Kidney (tissue), 22 donors: ENCODE measurements at regions of chr12 and their contacts with region 1.

Region 1: GRCh38 chr12:50986966-50987737 is 34.8 kb downstream of the HIGD1C start:
- DNase-seq: peak in 4 of 5 donors; percentile 35 to 87 (median 57)
- H3K4me3 ChIP-seq: no peak overlapping the region
- H3K27ac ChIP-seq: no peak overlapping the region
- H3K4me1 ChIP-seq: peaks cover 0 to 13% (median 6%) of the 10 kb centered on the region in 3 donors
- H3K27me3 ChIP-seq: no peaks in the 10 kb centered on the region
- CTCF ChIP-seq: peak; percentile 67

Region 2: DNA sequence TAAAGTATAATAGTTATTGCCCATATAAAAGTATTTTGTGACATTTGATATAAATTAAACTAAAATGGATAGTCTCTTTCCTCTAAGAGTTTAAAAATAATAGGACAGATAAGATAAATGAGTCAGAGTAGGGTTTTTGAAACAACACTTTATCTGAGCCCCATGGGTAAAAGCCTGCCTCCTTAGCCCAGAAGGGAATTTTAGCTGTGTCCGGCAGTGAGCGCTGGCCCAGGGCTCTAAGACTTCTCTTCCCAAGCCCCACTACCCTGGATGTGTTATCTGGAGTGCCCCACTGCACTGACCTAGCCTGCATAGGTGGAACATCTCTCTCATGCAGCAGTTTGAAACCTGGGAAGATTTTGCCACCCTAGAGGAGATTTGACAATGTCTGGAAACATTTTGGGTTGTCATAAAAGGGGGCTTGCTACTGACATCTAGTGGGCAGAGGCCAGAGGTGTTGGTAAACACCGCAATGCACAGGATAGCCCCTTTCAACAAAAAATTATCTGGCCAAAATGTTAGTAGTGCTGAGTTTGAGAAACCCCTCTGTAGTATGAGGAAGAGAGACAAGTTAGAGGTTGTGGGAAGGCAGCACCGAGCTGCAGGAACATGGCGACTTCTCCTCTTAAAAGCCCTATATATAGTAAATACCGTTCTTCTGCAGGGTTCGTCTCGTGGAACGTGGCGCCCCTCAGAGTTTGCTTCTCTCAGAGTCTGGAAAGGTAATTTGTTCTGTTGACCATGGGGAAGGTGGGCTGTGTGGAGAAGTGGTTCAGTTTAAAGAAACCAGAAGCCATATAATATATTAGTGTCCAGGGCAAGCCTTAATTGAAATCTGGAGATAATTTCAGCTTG is 252.5 kb before region 1 on chr12:
- intact Hi-C with region 1: no loop called
- DNase-seq: peak in 3 of 5 donors; percentile 38 to 69 (median 41)
- H3K4me3 ChIP-seq: no peak overlapping the region
- H3K27ac ChIP-seq: no peak overlapping the region
- H3K4me1 ChIP-seq: no peaks in the 10 kb centered on the region
- H3K27me3 ChIP-seq: no peaks in the 10 kb centered on the region
- CTCF ChIP-seq: peak; percentile 42

Region 3: DNA sequence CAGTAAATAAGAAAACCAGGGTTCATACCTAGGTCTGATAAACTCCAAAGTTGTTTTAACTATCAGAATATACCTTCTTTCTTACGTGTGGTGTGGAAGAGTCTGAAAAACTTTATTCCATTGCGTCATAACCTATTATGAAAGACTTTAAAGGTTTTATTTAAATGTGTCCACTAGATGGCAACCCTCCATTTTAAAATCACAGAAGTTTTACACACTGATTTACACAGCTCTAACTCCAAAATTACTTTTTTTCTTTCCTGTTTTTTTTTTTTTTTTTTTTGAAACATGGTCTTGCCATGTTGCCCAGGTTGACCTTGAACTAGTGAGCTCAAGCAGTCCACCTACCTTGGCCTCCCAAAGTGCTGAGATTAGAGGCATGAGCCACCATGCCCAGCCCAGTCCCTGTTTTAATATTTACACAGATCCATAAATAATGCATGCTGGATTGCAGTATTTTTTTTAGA is 161.7 kb before region 1 on chr12:
- intact Hi-C with region 1: loop called (anchors 10 kb)
- DNase-seq: peak in 2 of 5 donors; percentile 75 to 84
- H3K4me3 ChIP-seq: peak overlapping the region in 2 of 3 donors; percentile 30 to 48
- H3K27ac ChIP-seq: peak overlapping the region; percentile 65 to 80
- H3K4me1 ChIP-seq: peaks cover 0 to 9% (median 2%) of the 10 kb centered on the region in 3 donors
- H3K27me3 ChIP-seq: no peaks in the 10 kb centered on the region
- CTCF ChIP-seq: peak; percentile 51

Region 4: GRCh38 chr12:51147309-51147708 is 160.2 kb after region 1 on chr12:
- intact Hi-C with region 1: no loop called
- DNase-seq: no peak
- H3K4me3 ChIP-seq: no peak overlapping the region
- H3K27ac ChIP-seq: no peak overlapping the region
- H3K4me1 ChIP-seq: no peaks in the 10 kb centered on the region
- H3K27me3 ChIP-seq: no peaks in the 10 kb centered on the region
- CTCF ChIP-seq: no peak

Region 5: DNA sequence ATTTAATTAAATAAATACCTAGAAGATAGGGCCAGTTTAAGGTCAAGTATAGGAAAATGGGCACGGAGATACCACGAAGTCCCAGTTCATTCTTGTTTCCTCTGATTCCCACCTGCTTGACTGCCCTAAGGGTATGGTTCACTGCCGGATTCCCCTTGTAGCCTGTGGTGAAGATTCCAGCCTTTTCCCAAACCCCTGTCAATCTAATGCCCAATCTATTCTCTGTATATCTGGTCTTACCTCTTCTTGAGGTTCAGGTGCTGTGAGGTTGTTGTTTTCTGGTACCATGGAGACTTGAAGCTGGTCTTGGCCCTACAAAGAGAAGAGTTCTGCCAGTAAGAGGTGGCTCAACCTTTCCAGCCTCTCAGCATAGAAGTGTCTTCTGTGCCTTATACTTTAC is 297.3 kb after region 1 on chr12:
- intact Hi-C with region 1: no loop called
- DNase-seq: no peak
- H3K4me3 ChIP-seq: no peak overlapping the region
- H3K27ac ChIP-seq: no peak overlapping the region
- H3K4me1 ChIP-seq: no peaks in the 10 kb centered on the region
- H3K27me3 ChIP-seq: no peaks in the 10 kb centered on the region
- CTCF ChIP-seq: no peak